OCI-LY7 (cell line): ENCODE measurements at regions of chr6 and their contacts with region 1.

Region 1: GRCh38 chr6:35342258-35343091 is at the start of gene PPARD:
- DNase-seq: peak; percentile 94
- H3K4me3 ChIP-seq: peak within 1 kb of the TSS; percentile 85
- H3K27ac ChIP-seq: no peak within 1 kb of the TSS
- H3K4me1 ChIP-seq: peaks cover 22% of the 10 kb centered on the region
- CTCF ChIP-seq: peak; percentile 97
- total RNA-seq, gene PPARD: 4.6 and 6.1 TPM in 2 replicates

Region 2: DNA sequence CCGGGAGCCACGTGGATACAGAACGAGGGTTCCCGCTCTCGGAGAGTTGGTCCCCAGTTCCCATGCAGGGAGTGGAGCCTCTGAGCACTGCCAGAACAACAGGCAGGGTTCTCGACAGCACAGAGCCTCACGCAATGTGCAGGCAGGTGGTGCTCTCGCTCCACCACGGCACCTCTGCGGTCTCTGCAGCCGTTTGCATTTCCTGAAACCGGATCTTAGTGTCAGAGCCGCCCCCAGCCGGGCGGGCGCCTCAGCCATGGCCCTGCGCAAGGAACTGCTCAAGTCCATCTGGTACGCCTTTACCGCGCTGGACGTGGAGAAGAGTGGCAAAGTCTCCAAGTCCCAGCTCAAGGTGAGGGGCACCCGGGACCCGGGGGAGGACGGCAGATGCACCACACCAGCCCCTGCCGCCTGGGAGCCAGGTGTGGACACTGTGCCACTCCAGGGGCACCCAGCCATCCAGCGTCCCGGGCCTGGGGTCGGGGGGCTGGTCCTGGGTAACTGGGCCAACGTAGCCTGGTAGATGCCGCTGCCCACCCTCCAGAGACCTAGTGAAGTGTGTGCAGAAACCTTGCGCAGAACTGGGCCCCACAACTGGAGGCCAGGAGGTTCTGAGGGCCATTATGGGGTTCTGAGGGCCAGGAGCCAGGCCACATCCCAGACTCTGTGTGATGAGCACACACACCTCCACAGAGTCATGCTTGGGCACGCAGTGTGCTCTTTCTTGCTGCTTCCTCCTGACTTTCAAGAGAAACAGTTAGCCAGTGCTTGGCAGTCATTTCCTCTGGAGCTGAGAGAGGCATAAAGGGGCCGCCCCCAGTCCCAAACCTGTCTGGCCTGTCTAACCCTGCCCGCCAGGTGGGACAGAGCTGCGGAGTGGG is 44.6 kb before region 1 on chr6 and contains the start of gene DEF6:
- CTCF ChIA-PET with region 1: interaction called, 3 read pairs
- POLR2A ChIA-PET with region 1: no interaction called
- intact Hi-C with region 1: loop called (anchors 1 kb)
- DNase-seq: peak; percentile 93
- H3K4me3 ChIP-seq: peak within 1 kb of the TSS; percentile 94
- H3K27ac ChIP-seq: peak within 1 kb of the TSS; percentile 82
- H3K4me1 ChIP-seq: peaks cover 60% of the 10 kb centered on the region
- CTCF ChIP-seq: peak; percentile 90
- total RNA-seq, gene DEF6: 56.8 and 60.0 TPM in 2 replicates

Region 3: GRCh38 chr6:35402136-35402855 is 59.8 kb after region 1 on chr6:
- CTCF ChIA-PET with region 1: no interaction called
- POLR2A ChIA-PET with region 1: no interaction called
- intact Hi-C with region 1: no loop called
- DNase-seq: no peak
- H3K4me3 ChIP-seq: no peak overlapping the region
- H3K27ac ChIP-seq: no peak overlapping the region
- H3K4me1 ChIP-seq: no peaks in the 10 kb centered on the region
- CTCF ChIP-seq: no peak

Region 4: GRCh38 chr6:35415065-35415991 is 72.9 kb after region 1 on chr6:
- CTCF ChIA-PET with region 1: no interaction called
- POLR2A ChIA-PET with region 1: interaction called, 3 read pairs
- intact Hi-C with region 1: loop called (anchors 2 kb)
- DNase-seq: peak; percentile 58
- H3K4me3 ChIP-seq: no peak overlapping the region
- H3K27ac ChIP-seq: no peak overlapping the region
- H3K4me1 ChIP-seq: peaks cover 20% of the 10 kb centered on the region
- CTCF ChIP-seq: peak; percentile 68

Region 5: GRCh38 chr6:35452186-35453090 is 110.0 kb after region 1 on chr6 and contains the start of gene FANCE:
- CTCF ChIA-PET with region 1: interaction called, 3 read pairs
- POLR2A ChIA-PET with region 1: interaction called, 3 read pairs
- intact Hi-C with region 1: loop called (anchors 1 kb)
- DNase-seq: peak; percentile 93
- H3K4me3 ChIP-seq: peak within 1 kb of the TSS; percentile 85
- H3K27ac ChIP-seq: peak within 1 kb of the TSS; percentile 48
- H3K4me1 ChIP-seq: peaks cover 32% of the 10 kb centered on the region
- CTCF ChIP-seq: no peak
- total RNA-seq, gene FANCE: 12.4 and 14.4 TPM in 2 replicates

Region 6: GRCh38 chr6:35468181-35468979 is 125.9 kb after region 1 on chr6 and contains the start of gene RPL10A:
- CTCF ChIA-PET with region 1: interaction called, 3 read pairs
- POLR2A ChIA-PET with region 1: no interaction called
- intact Hi-C with region 1: loop called (anchors 1 kb)
- DNase-seq: peak; percentile 98
- H3K4me3 ChIP-seq: peak within 1 kb of the TSS; percentile 91
- H3K27ac ChIP-seq: peak within 1 kb of the TSS; percentile 83
- H3K4me1 ChIP-seq: peaks cover 38% of the 10 kb centered on the region
- CTCF ChIP-seq: peak; percentile 95
- total RNA-seq, gene RPL10A: 2,473 and 2,643 TPM in 2 replicates